ENCODE measurements at regions of chr15 and their contacts with region 1.

Region 1: DNA sequence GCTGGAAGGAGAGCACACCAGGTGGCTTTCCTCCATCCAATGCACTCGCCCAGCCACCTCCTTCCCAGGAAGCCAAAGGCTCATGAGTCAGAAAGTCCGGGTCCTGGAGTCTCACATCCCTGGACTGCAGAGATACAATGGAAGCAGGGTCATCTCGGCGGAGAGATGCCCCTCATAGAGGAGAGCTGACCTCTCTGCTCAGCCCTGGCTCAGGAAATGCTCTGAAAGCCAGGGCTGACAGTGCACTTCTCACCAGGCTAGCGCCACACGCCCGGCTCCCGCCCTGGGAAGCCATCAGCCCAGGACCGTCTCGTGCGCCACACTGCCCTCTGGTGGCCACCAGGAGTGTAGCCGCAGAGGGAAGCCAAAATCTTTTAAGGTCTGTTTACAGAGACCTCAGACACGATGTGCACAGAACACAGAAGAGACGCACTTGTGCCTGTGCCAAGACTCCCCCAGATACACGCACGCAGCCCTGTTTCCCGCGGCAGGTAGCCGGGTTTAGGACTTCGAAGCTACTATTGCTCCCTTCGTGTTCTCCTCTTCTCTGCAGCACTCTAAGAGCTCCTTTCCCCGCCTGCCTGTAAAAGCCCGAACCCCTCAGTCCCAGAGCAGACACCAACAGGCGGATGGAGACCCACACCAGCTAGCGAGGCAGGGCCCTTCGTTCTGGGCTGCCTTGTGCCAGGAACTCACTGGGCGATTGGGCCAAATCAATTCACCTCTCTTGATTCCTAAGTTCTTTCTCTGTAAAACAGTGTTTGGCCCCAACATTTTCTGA is 9.7 kb downstream of the NTRK3 start:
- DNase-seq: peak; percentile 70
- H3K4me3 Mint-ChIP-seq: no peak overlapping the region
- H3K27ac Mint-ChIP-seq: no peak overlapping the region
- H3K4me1 Mint-ChIP-seq: peaks cover 4% of the 10 kb centered on the region
- H3K27me3 Mint-ChIP-seq: peaks cover 14% of the 10 kb centered on the region

Region 2: GRCh38 chr15:88274553-88275460 is 28.0 kb after region 1 on chr15:
- CTCF ChIA-PET with region 1: interaction called, 30 read pairs
- POLR2A ChIA-PET with region 1: no interaction called
- DNase-seq: peak; percentile 59
- H3K4me3 Mint-ChIP-seq: no peak overlapping the region
- H3K27ac Mint-ChIP-seq: no peak overlapping the region
- H3K4me1 Mint-ChIP-seq: no peaks in the 10 kb centered on the region
- H3K27me3 Mint-ChIP-seq: peaks cover 26% of the 10 kb centered on the region